ENCODE measurements at regions of chr2 and their contacts with region 1.

Region 1: GRCh38 chr2:88659538-88659916 is 31.9 kb upstream of the RPIA start:
- DNase-seq: peak in 1 of 2 experiments; percentile 16
- ATAC-seq: peak in 1 of 2 experiments; percentile 49; a peak in 2 of 6 replicates
- H3K4me3 ChIP-seq: no peak overlapping the region
- H3K27ac ChIP-seq: peak overlapping the region in 1 of 2 experiments; percentile 30; a peak in 2 of 6 replicates
- H3K4me1 ChIP-seq: peaks cover 23% of the 10 kb centered on the region
- CTCF ChIP-seq: no peak
- EP300 ChIP-seq: no peak
- POLR2A ChIP-seq: no peak
- RAD21 ChIP-seq: no peak

Region 2: GRCh38 chr2:88590998-88591613 is 68.4 kb before region 1 on chr2:
- CTCF ChIA-PET with region 1: interaction called, 19 read pairs
- POLR2A ChIA-PET with region 1: no interaction called
- DNase-seq: peak; percentile 61 to 73
- ATAC-seq: peak; percentile 90 to 94
- H3K4me3 ChIP-seq: no peak overlapping the region
- H3K27ac ChIP-seq: no peak overlapping the region
- H3K4me1 ChIP-seq: no peaks in the 10 kb centered on the region
- CTCF ChIP-seq: peak; percentile 95
- EP300 ChIP-seq: no peak
- POLR2A ChIP-seq: no peak
- RAD21 ChIP-seq: peak; percentile 89 to 90

Region 3: GRCh38 chr2:88927128-88927527 is 267.6 kb after region 1 on chr2:
- CTCF ChIA-PET with region 1: no interaction called
- POLR2A ChIA-PET with region 1: no interaction called
- DNase-seq: no peak
- ATAC-seq: no peak
- H3K4me3 ChIP-seq: no peak overlapping the region
- H3K27ac ChIP-seq: no peak overlapping the region
- H3K4me1 ChIP-seq: no peaks in the 10 kb centered on the region
- CTCF ChIP-seq: no peak
- EP300 ChIP-seq: no peak
- POLR2A ChIP-seq: no peak
- RAD21 ChIP-seq: no peak